ENCODE measurements at regions of chr20 and their contacts with region 1.

Region 1: GRCh38 chr20:32031007-32031958 is 20.8 kb upstream of the HCK start:
- DNase-seq: peak; percentile 17
- H3K4me3 ChIP-seq: peak overlapping the region; percentile 30
- CTCF ChIP-seq: peak; percentile 62

Region 2: GRCh38 chr20:31835977-31836852 is 195.1 kb before region 1 on chr20:
- CTCF ChIA-PET with region 1: interaction called, 34 read pairs
- POLR2A ChIA-PET with region 1: no interaction called
- DNase-seq: no peak
- H3K4me3 ChIP-seq: no peak overlapping the region
- CTCF ChIP-seq: no peak

Region 3: DNA sequence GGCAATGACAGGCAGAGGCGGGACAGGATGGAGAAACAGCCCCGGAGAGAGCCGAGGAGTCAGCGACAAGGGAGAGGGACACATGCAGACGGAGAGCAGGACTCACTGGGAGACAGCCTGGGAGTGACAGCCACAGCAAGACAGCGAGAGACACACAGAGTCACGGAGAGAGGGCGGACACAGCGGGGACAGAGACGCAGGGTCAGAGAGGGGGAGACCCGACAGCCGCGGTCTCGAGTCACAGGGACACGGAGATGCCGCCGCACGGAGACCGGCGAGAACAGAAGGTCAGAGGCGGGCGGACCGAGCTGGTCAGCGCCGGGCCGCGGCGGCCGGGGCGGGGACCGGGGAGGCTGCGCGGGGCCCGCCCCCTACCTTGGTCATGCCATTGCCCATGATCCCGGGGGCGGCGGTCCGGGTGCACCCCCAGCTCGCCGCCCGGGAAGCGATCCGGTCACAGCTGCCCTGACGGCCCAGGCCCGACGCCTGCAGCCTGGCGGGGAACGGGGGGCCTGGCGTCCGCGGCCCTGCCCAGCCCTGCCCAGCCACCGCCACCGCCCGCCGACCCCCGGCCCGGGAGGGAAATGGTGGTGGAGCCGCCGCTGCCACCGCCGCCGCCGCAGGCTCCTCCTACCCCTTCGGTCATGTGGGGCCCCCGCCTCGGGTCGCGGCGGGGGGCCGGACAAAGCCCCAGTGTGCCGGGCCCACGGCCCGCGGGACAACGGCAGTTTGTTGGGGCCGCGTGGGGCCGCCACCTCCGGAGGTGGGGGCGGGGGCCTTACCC is 161.1 kb before region 1 on chr20 and contains the starts of genes DUSP15 and TTLL9:
- CTCF ChIA-PET with region 1: interaction called, 11 read pairs
- POLR2A ChIA-PET with region 1: no interaction called
- DNase-seq: no peak
- H3K4me3 ChIP-seq: peak within 1 kb of the TSS; percentile 27
- CTCF ChIP-seq: no peak

Region 4: GRCh38 chr20:32012159-32012688 is 19.1 kb before region 1 on chr20:
- CTCF ChIA-PET with region 1: interaction called, 19 read pairs
- POLR2A ChIA-PET with region 1: no interaction called
- DNase-seq: no peak
- H3K4me3 ChIP-seq: no peak overlapping the region
- CTCF ChIP-seq: no peak

Region 5: DNA sequence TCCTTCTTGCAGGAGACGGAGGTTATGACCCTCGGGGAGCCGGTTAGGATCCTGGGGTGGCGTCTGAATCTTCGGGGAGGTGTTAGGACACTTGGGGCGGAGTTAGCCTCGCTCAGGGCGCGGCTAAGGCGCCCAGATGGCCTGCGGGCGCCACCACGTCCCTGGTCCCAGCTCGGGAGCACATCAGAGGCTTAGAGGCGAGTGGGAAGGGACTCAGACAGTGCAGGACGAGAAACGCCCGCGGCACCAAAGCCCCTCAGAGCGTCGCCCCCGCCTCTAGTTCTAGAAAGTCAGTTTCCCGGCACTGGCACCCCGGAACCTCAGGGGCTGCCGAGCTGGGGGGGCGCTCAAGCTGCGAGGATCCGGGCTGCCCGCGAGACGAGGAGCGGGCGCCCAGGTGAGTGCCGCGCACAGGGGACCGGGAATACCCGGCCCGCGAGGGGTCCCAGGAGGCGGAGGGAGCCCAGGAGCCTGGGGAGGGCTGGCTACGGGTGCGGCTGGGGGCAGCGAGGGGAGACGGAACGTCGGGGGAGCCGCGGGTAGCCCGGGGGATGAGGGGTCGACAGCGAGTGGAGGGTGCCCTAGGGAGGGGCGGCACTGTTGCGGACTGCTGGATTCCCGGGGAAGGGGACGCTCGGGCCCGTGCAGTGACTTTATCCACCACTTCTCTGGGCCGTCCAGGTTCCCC is 21.0 kb after region 1 on chr20 and contains the start of gene HCK:
- CTCF ChIA-PET with region 1: interaction called, 11 read pairs
- POLR2A ChIA-PET with region 1: no interaction called
- DNase-seq: no peak
- H3K4me3 ChIP-seq: no peak within 1 kb of the TSS
- CTCF ChIP-seq: no peak

Region 6: GRCh38 chr20:32080783-32081182 is 49.5 kb after region 1 on chr20:
- CTCF ChIA-PET with region 1: interaction called, 224 read pairs
- POLR2A ChIA-PET with region 1: no interaction called
- DNase-seq: no peak
- H3K4me3 ChIP-seq: no peak overlapping the region
- CTCF ChIP-seq: no peak